Sigmoid colon (tissue), 7 donors: ENCODE measurements at regions of chr12 and their contacts with region 1.

Region 1: DNA sequence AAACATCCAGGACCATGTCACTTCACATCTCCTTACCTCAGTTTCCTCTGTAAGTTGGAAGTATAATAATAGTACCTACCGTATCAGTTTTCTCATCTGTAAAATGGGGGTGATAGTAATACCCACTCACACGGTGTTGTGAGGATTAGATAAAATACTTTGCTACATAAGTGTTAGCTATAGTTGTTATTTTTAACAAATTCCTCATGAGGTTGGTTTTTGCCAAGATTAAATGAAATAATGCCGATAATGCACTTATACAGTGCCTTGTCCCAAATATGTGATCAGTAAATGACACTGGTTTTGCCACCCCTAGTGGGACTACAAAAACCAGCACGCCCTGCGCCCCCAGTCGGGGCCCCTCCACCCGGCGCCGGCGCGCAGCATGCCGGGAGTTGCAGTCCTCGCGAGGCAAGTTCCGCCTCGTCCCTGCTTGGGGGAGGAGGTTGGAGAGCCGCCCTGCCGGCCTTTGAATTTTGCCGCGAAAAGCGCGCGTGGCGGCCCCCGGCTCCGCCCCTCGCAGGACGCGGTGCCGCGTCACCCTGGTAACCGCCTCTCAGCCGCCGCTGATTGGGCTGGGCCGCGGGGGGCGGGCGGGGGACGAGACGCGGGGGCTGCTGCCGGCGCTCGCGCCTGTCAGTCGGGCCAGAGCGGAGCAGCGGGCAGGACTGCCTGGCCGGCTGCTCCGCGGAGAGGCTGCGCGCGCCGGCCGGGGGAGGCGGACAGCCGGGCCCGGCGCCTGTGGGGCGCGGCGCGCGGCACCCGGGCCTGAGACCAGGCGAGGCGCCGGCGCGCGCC is at the start of gene FAM222A:
- DNase-seq: peak; percentile 98
- H3K4me3 ChIP-seq: peak within 1 kb of the TSS; percentile 46 to 60 (median 58)
- H3K27ac ChIP-seq: peak within 1 kb of the TSS; percentile 62 to 78 (median 75)
- H3K4me1 ChIP-seq: peaks cover 0 to 46% (median 43%) of the 10 kb centered on the region in 4 donors
- H3K27me3 ChIP-seq: peaks cover 0 to 38% (median 28%) of the 10 kb centered on the region in 3 donors
- CTCF ChIP-seq: peak in 2 of 4 experiments; percentile 9 to 37
- EP300 ChIP-seq: no peak
- POLR2A ChIP-seq: no peak
- total RNA-seq, gene FAM222A: 1.1 to 3.3 (median 1.7) TPM

Region 2: GRCh38 chr12:109597795-109598427 is 115.5 kb before region 1 on chr12:
- intact Hi-C with region 1: loop called (anchors 2 kb)
- DNase-seq: peak; percentile 94
- H3K4me3 ChIP-seq: no peak overlapping the region
- H3K27ac ChIP-seq: no peak overlapping the region
- H3K4me1 ChIP-seq: peaks cover 0 to 12% (median 8%) of the 10 kb centered on the region in 4 donors
- H3K27me3 ChIP-seq: no peaks in the 10 kb centered on the region
- CTCF ChIP-seq: peak; percentile 86 to 97 (median 96)
- EP300 ChIP-seq: no peak
- POLR2A ChIP-seq: no peak

Region 3: DNA sequence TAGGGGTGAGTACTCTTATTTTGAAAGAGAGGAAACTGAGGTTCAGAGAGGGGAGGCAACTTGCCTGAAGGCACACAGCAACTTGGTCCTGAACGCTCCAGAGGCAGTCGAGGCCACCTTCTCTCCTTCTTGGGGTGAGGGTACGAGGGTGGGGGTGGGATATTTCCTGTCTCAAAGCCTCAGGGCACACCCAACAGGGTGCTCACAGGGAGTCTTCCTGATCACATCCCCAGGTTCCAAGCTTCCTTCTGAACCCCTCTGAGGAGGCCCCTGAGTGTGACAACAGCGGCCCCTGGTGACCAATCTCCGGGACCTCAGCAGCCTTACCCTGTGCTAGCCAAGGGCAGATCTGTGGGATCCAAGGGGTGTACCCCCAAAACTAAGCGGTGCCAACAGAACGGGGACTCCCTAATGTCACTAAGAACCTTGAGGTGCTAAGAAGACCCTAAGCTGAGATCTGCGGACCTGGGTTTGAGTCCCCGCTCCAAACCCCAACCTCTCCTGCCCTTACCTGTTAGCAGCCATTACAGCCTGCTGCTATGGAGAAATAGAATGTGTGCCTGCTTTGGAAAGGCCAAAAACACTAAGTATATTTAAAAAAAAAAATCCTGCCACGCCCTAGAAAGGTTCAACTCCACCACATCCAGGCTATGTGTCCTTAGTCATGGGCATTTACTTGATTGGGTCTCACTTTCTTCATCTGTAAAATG is 61.9 kb after region 1 on chr12:
- intact Hi-C with region 1: loop called (anchors 5 kb)
- DNase-seq: peak; percentile 87
- H3K4me3 ChIP-seq: no peak overlapping the region
- H3K27ac ChIP-seq: no peak overlapping the region
- H3K4me1 ChIP-seq: peaks cover 0 to 14% (median 11%) of the 10 kb centered on the region in 4 donors
- H3K27me3 ChIP-seq: no peaks in the 10 kb centered on the region
- CTCF ChIP-seq: peak; percentile 75 to 89 (median 86)
- EP300 ChIP-seq: no peak
- POLR2A ChIP-seq: no peak

Region 4: GRCh38 chr12:109995686-109996482 is 282.5 kb after region 1 on chr12 and contains the start of gene GIT2:
- intact Hi-C with region 1: loop called (anchors 10 kb)
- DNase-seq: peak; percentile 97
- H3K4me3 ChIP-seq: peak within 1 kb of the TSS; percentile 75 to 98 (median 89)
- H3K27ac ChIP-seq: peak within 1 kb of the TSS; percentile 79 to 87 (median 84)
- H3K4me1 ChIP-seq: peaks cover 0 to 48% (median 34%) of the 10 kb centered on the region in 4 donors
- H3K27me3 ChIP-seq: no peaks in the 10 kb centered on the region
- CTCF ChIP-seq: no peak
- EP300 ChIP-seq: no peak
- POLR2A ChIP-seq: peak; percentile 41 to 45
- total RNA-seq, gene GIT2: 26.7 to 54.6 (median 35.1) TPM

Region 5: GRCh38 chr12:110100315-110100970 is 387.1 kb after region 1 on chr12:
- intact Hi-C with region 1: no loop called
- DNase-seq: peak; percentile 80
- H3K4me3 ChIP-seq: no peak overlapping the region
- H3K27ac ChIP-seq: peak overlapping the region; percentile 21 to 67 (median 59)
- H3K4me1 ChIP-seq: peaks cover 0 to 19% (median 10%) of the 10 kb centered on the region in 4 donors
- H3K27me3 ChIP-seq: no peaks in the 10 kb centered on the region
- CTCF ChIP-seq: peak; percentile 79 to 96 (median 93)
- EP300 ChIP-seq: no peak
- POLR2A ChIP-seq: no peak